SK-N-SH (cell line): ENCODE measurements at regions of chr1 and their contacts with region 1.

Region 1: GRCh38 chr1:5514519-5515183 is 477.6 kb downstream of the NPHP4 start:
- DNase-seq: peak; percentile 89
- H3K4me3 ChIP-seq: no peak overlapping the region; a peak in 1 of 4 replicates
- H3K27ac ChIP-seq: no peak overlapping the region
- H3K4me1 ChIP-seq: peaks cover 0 to 19% of the 10 kb centered on the region in 2 experiments; a peak in 1 of 4 replicates
- H3K27me3 ChIP-seq: no peaks in the 10 kb centered on the region
- CTCF ChIP-seq: peak; percentile 83
- EP300 ChIP-seq: no peak
- RAD21 ChIP-seq: peak; percentile 69

Region 2: GRCh38 chr1:5481889-5482288 is 32.8 kb before region 1 on chr1:
- CTCF ChIA-PET with region 1: interaction called, 16 read pairs
- POLR2A ChIA-PET with region 1: no interaction called
- DNase-seq: no peak
- H3K4me3 ChIP-seq: no peak overlapping the region
- H3K27ac ChIP-seq: no peak overlapping the region
- H3K4me1 ChIP-seq: peaks cover 0 to 37% of the 10 kb centered on the region in 2 experiments; a peak in 1 of 4 replicates
- H3K27me3 ChIP-seq: no peaks in the 10 kb centered on the region
- CTCF ChIP-seq: no peak
- EP300 ChIP-seq: no peak
- RAD21 ChIP-seq: peak; percentile 31

Region 3: GRCh38 chr1:5504354-5504720 is 10.3 kb before region 1 on chr1:
- CTCF ChIA-PET with region 1: interaction called, 38 read pairs
- POLR2A ChIA-PET with region 1: no interaction called
- DNase-seq: no peak
- H3K4me3 ChIP-seq: no peak overlapping the region
- H3K27ac ChIP-seq: no peak overlapping the region
- H3K4me1 ChIP-seq: peaks cover 0 to 38% of the 10 kb centered on the region in 2 experiments; a peak in 1 of 4 replicates
- H3K27me3 ChIP-seq: no peaks in the 10 kb centered on the region
- CTCF ChIP-seq: no peak
- EP300 ChIP-seq: no peak
- RAD21 ChIP-seq: no peak

Region 4: DNA sequence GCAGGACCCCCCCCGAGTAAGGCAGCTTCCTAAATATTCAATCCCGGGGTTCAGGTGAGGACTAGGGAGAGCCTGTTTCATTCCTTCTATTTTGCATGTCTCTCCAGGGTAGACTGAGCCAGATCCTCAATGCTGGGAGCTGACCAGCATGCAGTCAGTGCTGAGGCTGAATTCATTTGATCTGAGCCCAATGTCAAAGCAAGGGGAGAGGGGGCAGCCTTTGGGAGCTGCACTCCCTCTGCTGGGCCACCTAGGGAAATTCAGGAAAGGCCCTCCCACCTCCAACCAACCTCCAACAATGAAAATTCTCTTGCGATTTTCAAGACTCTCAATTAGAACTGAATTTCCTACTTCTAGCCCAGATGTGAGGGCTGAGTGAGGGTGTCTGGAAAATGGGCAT is 106.3 kb after region 1 on chr1:
- CTCF ChIA-PET with region 1: interaction called, 36 read pairs
- POLR2A ChIA-PET with region 1: no interaction called
- DNase-seq: peak; percentile 83
- H3K4me3 ChIP-seq: no peak overlapping the region
- H3K27ac ChIP-seq: no peak overlapping the region
- H3K4me1 ChIP-seq: peaks cover 0 to 8% of the 10 kb centered on the region in 2 experiments; a peak in 1 of 4 replicates
- H3K27me3 ChIP-seq: no peaks in the 10 kb centered on the region
- CTCF ChIP-seq: no peak
- EP300 ChIP-seq: no peak
- RAD21 ChIP-seq: peak; percentile 80

Region 5: DNA sequence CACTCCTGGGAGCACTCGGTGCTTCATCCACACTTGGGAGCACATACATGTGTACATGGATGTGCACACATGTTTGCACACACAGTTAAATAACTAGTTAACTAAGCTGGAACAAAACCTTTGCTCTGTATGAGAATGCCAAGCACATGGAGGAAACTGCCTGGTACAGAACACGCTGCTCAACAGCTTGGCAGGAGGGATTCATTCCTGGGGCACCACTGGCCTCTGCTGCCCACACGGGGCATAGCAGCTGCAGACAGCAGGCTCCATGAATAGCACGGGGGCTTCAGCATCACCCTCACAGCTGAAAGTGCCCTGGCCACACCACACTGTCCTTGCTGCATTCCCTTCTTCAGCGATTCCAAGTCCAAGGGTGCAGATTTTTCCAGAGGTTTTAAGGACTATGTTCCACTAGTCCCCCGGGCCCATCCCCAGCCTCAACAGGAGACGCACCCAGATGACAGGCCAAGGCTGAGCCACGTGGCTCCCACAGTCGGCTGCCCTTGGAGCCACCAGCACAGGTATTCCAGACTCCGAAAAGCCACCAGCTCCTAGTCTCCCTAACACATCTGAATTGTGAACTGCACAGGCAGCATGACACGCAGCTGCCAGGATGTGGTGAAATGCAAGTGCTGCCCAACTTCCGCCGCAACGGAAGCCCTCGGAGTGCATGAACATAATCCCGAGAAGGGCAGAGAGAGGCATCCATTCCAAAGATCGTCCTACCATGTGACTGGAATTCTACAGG is 460.7 kb after region 1 on chr1:
- CTCF ChIA-PET with region 1: interaction called, 18 read pairs
- POLR2A ChIA-PET with region 1: no interaction called
- DNase-seq: peak; percentile 84
- H3K4me3 ChIP-seq: peak overlapping the region in 1 of 2 experiments; percentile 39; a peak in 1 of 4 replicates
- H3K27ac ChIP-seq: no peak overlapping the region
- H3K4me1 ChIP-seq: peaks cover 0 to 21% of the 10 kb centered on the region in 2 experiments; a peak in 1 of 4 replicates
- H3K27me3 ChIP-seq: no peaks in the 10 kb centered on the region
- CTCF ChIP-seq: peak; percentile 71
- EP300 ChIP-seq: no peak
- RAD21 ChIP-seq: peak; percentile 96